Upper lobe of right lung (tissue), 1 donor: ENCODE measurements at regions of chr10 and their contacts with region 1.

Region 1: DNA sequence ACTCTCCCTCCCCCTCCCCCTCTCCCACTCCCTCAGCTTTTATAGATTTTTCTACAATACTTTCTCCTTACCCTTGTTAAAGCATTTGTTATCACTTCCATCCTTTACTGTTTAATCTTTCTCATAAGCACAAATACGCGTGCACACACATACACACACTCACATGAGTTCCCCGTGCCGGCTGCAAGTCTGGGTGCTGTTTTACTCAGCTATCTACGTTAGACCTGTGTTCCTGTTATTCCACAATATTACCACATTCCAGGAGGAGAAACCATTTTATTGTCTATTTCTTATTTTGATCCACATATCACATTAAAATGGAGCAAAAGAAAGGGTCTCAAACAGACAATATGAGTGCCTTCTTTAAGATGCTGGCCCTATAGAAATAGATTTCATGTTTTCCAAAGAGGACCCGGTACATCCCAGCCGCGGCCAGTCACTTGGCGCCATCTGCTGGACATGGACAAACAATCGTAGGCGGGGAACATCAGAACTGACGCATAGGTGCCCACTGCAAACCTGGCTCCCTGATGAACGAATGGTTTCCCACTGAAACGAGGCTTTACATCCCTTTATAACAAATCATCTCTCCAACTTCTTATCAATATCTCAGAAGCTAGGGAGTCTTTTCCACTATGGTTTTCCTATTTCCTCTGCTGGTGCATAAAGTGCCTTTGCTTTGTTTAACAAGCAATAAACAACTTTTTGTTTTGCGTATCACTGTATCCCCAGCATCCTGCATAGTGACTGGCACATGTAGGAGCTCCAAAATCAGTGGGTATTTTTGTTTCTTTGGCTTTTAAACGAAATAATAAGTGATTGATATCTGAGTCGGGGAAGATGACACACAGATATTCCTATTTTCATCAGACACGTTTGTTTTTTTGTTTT is 25.2 kb upstream of the OPTN start:
- DNase-seq: peak; percentile 77
- ATAC-seq: peak; percentile 90
- H3K4me3 ChIP-seq: no peak overlapping the region
- H3K27ac ChIP-seq: no peak overlapping the region
- H3K4me1 ChIP-seq: no peaks in the 10 kb centered on the region
- H3K27me3 ChIP-seq: peaks cover 13% of the 10 kb centered on the region
- CTCF ChIP-seq: peak; percentile 86

Region 2: DNA sequence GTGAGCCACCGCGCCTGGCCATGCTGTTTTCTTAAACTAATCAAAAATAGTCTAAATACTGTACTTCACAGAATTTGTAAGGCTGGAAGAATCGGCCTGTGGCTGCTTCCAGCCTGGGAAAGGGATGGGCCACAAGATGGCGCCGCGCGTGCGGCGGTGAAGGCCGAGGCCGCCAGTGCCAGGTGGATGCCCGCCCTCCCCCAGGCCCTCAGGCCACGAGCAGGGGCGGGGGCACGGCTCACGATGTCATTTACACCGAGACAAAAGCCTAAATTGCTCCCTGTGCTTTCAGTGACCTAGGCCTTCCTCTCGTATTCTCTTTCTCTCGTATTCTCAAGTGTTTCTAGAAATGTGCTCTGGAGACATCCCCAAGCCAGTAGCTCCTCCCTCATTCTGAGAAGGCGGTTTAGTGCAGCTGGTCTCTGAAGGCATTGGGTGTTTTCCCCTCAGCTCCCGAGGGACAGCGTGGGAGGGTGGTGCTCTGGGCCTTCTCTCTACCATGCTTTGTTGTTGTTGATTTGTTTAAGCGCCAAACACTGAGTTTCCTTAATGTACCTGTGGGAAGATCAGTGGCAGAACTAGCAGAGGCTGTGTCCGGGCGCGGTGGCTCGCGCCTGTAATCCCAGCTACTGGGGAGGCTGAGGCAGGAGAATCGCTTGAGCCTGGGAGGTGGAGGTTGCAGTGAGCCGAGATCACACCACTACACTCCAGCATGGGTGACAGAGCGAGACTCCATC is 810.4 kb before region 1 on chr10:
- intact Hi-C with region 1: loop called (anchors 5 kb)
- DNase-seq: peak; percentile 90
- ATAC-seq: peak; percentile 90
- H3K4me3 ChIP-seq: peak overlapping the region; percentile 26
- H3K27ac ChIP-seq: no peak overlapping the region
- H3K4me1 ChIP-seq: peaks cover 4% of the 10 kb centered on the region
- H3K27me3 ChIP-seq: no peaks in the 10 kb centered on the region
- CTCF ChIP-seq: peak; percentile 80

Region 3: DNA sequence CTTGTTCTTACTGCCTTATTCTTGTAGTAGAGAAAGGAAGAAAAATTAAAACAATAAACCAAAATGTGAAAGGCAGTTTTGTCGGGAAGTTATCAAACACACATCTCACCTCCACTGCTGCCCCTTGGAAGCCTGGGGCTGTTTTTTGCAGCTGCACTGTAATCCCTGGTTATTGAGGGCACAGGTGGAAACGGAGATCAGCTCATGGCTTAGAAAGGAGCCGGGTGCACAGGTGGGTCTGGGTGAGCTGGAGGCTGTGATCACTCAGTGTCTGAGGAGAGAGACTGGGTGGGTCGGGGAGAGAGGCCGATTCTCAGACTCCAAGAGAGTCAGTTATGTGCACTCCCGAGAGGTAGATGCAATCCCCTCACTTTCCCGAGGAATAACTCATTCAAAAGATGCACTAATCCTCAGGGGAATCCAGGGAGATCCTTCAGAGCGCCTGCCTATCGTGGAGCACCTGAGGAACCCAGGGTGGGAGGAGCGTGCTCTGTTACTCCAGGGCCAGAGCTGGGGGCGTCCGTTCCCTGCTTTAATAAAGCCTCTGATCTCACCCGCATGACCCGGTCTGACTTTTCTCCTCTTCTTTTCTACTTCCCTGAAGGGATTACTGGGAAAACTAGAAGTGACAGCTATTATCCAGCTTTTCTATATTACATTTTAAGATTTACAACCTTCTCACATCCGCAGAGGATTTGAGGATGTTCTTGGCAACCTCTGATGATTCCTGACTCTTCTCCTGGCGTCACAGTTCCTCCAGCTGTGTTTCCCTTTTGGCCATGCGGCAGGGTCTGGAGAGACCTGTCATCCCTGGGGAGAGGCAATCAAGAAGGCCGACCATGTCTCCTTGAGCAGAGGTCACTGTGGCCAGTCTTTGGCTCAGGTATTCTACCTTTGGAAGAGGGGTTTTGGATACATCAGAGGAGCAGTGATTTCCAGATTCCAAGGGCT is 643.4 kb before region 1 on chr10:
- intact Hi-C with region 1: no loop called
- DNase-seq: no peak
- ATAC-seq: no peak
- H3K4me3 ChIP-seq: no peak overlapping the region
- H3K27ac ChIP-seq: no peak overlapping the region
- H3K4me1 ChIP-seq: no peaks in the 10 kb centered on the region
- H3K27me3 ChIP-seq: no peaks in the 10 kb centered on the region
- CTCF ChIP-seq: no peak

Region 4: GRCh38 chr10:13271552-13272163 is 196.9 kb after region 1 on chr10:
- intact Hi-C with region 1: no loop called
- DNase-seq: peak; percentile 63
- ATAC-seq: peak; percentile 65
- H3K4me3 ChIP-seq: no peak overlapping the region
- H3K27ac ChIP-seq: no peak overlapping the region
- H3K4me1 ChIP-seq: peaks cover 4% of the 10 kb centered on the region
- H3K27me3 ChIP-seq: no peaks in the 10 kb centered on the region
- CTCF ChIP-seq: peak; percentile 40

Region 5: GRCh38 chr10:13317474-13317873 is 242.7 kb after region 1 on chr10:
- intact Hi-C with region 1: no loop called
- DNase-seq: no peak
- ATAC-seq: peak; percentile 50
- H3K4me3 ChIP-seq: no peak overlapping the region
- H3K27ac ChIP-seq: no peak overlapping the region
- H3K4me1 ChIP-seq: no peaks in the 10 kb centered on the region
- H3K27me3 ChIP-seq: no peaks in the 10 kb centered on the region
- CTCF ChIP-seq: no peak